CD14-positive monocyte (primary cell): ENCODE measurements at regions of chr11 and their contacts with region 1.

Region 1: DNA sequence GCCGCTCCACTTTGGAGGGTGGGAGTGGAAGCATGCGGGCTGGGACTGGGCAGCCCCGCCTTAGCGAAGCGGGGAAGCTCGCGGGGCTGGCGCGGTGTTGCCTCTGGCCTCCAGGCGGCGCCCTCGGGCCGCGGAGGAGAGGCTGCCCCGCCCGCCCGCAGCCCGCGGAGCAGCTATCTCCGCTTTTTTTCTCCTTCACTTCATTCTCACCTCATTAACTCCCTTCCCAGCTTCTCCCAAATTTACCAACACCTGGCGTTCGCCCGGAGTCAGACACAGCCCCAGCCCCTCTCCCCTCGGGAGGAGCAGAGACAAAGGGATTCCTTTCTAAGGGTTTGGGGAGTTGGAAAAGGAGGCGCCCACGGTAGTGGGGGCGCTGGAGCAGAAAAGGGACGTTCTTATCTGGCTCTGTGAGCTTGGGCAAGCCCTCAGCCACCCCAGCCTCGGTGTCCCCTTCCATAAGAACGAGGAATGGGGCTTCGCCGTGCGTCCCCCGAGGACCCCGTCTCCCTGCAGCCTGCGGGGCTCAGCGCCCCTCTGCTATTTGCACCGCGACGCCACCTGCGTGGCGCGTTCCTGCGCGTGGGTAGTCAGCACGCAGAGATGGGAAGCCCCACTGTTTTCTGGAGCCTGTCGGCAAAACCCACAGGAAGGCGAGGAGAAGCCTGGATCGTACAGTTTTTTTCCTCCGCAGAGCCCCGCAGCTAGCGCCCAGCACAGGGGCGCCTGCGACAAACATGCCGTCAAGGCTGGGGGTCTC is 1.5 kb upstream of the WNT11 start:
- DNase-seq: peak; percentile 67 to 75 (median 69)
- H3K4me3 ChIP-seq: peak overlapping the region; percentile 50 to 90 (median 53)
- H3K4me3 Mint-ChIP-seq: peak overlapping the region; percentile 84 to 95
- H3K27ac ChIP-seq: no peak overlapping the region
- H3K27ac Mint-ChIP-seq: peak overlapping the region in 2 of 7 donors; percentile 41 to 66
- H3K4me1 ChIP-seq: peaks cover 48 to 58% of the 10 kb centered on the region in 2 donors
- H3K4me1 Mint-ChIP-seq: peaks cover 38% of the 10 kb centered on the region
- H3K27me3 ChIP-seq: peaks cover 42 to 72% of the 10 kb centered on the region in 2 donors
- H3K27me3 Mint-ChIP-seq: peaks cover 57 to 97% (median 75%) of the 10 kb centered on the region in 3 donors
- CTCF ChIP-seq: peak; percentile 98

Region 2: DNA sequence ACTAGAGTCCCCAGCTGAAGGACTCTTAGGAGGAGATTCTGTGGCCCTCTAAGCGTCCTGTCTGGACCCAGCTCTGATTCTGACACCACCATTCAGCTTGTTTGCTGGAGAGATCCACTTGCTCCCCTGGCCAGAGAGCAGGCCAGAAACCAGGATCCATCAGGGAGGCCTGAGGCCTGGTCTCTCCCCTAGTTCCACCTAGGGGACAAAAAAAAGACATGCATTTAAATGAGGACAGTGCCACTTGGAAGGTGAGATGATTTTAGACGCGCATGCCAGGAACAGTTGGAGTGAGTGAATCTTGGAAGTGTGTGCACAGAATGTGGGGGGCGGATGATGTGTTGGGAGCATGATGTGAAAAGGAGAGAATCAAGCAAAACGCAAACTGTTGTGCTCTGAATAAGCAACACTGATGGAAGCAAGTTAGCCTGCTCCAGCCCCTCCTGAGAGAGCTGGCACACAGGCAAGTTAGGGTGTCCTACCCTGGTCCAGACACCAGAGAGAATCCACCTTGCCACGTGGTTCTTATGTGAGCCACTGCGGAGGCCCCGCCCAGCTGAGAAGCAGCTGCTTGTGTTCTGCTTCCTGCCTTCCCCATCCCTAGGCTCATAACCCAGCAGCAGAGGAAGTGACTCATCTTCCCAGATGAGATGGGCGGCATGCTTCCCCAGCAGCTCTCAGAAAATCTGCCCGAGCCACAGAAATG is 1065.0 kb before region 1 on chr11:
- intact Hi-C with region 1: no loop called
- DNase-seq: peak; percentile 93 to 96 (median 95)
- H3K4me3 ChIP-seq: peak overlapping the region in 1 of 3 experiments; percentile 47
- H3K4me3 Mint-ChIP-seq: peak overlapping the region; percentile 4 to 82
- H3K27ac ChIP-seq: peak overlapping the region in 1 of 2 donors; percentile 51
- H3K27ac Mint-ChIP-seq: peak overlapping the region; percentile 77 to 96 (median 88)
- H3K4me1 ChIP-seq: peaks cover 34 to 38% of the 10 kb centered on the region in 2 donors
- H3K4me1 Mint-ChIP-seq: peaks cover 38% of the 10 kb centered on the region
- H3K27me3 ChIP-seq: no peaks in the 10 kb centered on the region
- H3K27me3 Mint-ChIP-seq: peaks cover 8 to 14% (median 8%) of the 10 kb centered on the region in 3 donors
- CTCF ChIP-seq: no peak

Region 3: GRCh38 chr11:76235233-76236091 is 27.6 kb after region 1 on chr11:
- intact Hi-C with region 1: loop called (anchors 2 kb)
- DNase-seq: peak; percentile 88 to 90 (median 90)
- H3K4me3 ChIP-seq: peak overlapping the region; percentile 62 to 86 (median 75)
- H3K4me3 Mint-ChIP-seq: peak overlapping the region; percentile 95 to 96
- H3K27ac ChIP-seq: peak overlapping the region; percentile 89 to 91
- H3K27ac Mint-ChIP-seq: peak overlapping the region; percentile 97 to 99 (median 99)
- H3K4me1 ChIP-seq: peaks cover 30 to 41% of the 10 kb centered on the region in 2 donors
- H3K4me1 Mint-ChIP-seq: peaks cover 33% of the 10 kb centered on the region
- H3K27me3 ChIP-seq: no peaks in the 10 kb centered on the region
- H3K27me3 Mint-ChIP-seq: peaks cover 0 to 10% (median 3%) of the 10 kb centered on the region in 3 donors
- CTCF ChIP-seq: no peak

Region 4: DNA sequence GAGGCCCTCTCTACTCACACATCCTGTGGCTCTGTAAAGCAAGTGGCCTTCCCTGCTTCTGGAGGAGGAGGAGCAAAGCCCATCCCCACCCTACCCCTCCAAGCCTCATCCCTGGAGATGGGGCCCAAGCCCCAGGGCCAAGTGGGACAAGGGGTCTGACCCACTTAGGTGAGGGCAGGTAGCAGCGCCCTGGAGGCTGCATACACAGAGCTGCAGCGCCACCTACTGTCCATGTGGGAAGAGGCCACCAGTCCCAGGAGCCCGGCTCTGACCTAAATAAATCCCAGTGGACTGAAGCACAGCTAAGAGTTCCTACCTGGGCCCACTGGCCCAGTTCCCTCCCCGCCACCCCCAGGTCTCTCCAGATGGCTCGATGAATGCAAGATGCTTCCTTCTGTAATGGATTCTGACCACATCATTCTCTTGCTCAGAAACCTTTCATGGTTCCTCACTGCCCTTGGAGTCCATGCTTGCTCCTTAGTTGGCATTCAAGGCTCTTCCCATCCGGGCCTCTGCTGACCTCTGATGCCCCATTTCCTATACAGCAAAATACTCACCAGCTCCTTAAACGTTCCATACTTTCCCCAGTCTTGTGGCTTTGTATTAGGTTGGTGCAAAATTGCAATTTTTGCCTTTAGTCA is 111.0 kb after region 1 on chr11:
- intact Hi-C with region 1: loop called (anchors 1 to 2 kb)
- DNase-seq: peak; percentile 70 to 81 (median 78)
- H3K4me3 ChIP-seq: no peak overlapping the region
- H3K4me3 Mint-ChIP-seq: no peak overlapping the region
- H3K27ac ChIP-seq: no peak overlapping the region
- H3K27ac Mint-ChIP-seq: no peak overlapping the region
- H3K4me1 ChIP-seq: peaks cover 11 to 18% of the 10 kb centered on the region in 2 donors
- H3K4me1 Mint-ChIP-seq: peaks cover 20% of the 10 kb centered on the region
- H3K27me3 ChIP-seq: peaks cover 17 to 35% of the 10 kb centered on the region in 2 donors
- H3K27me3 Mint-ChIP-seq: peaks cover 25 to 38% (median 33%) of the 10 kb centered on the region in 3 donors
- CTCF ChIP-seq: peak; percentile 98

Region 5: GRCh38 chr11:76355172-76355571 is 147.3 kb after region 1 on chr11:
- intact Hi-C with region 1: no loop called
- DNase-seq: no peak
- H3K4me3 ChIP-seq: no peak overlapping the region
- H3K4me3 Mint-ChIP-seq: no peak overlapping the region
- H3K27ac ChIP-seq: no peak overlapping the region
- H3K27ac Mint-ChIP-seq: no peak overlapping the region
- H3K4me1 ChIP-seq: no peaks in the 10 kb centered on the region
- H3K4me1 Mint-ChIP-seq: no peaks in the 10 kb centered on the region
- H3K27me3 ChIP-seq: no peaks in the 10 kb centered on the region
- H3K27me3 Mint-ChIP-seq: no peaks in the 10 kb centered on the region
- CTCF ChIP-seq: no peak

Region 6: DNA sequence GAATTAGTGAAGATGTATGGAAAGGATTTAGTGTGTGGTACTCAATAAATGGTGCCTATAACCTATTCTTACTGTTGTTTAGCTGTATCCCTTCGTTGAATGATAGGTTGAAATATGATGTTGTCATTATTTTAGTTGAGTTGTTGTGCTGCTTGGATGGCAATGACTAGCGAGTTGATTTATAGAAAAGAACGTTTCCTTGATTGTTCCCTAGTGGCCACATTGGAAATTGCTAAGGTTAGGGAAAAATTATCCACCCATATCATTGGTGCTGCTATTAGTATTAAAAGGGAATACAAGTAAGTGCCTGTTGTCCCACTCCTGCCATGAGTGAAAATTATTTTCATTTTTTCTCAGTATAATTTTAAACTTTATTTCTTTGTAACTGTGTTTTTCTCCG is 251.5 kb after region 1 on chr11:
- intact Hi-C with region 1: loop called in 1 of 2 experiments (anchors 10 kb)
- DNase-seq: no peak
- H3K4me3 ChIP-seq: no peak overlapping the region
- H3K4me3 Mint-ChIP-seq: no peak overlapping the region
- H3K27ac ChIP-seq: no peak overlapping the region
- H3K27ac Mint-ChIP-seq: no peak overlapping the region
- H3K4me1 ChIP-seq: peaks cover 5 to 11% of the 10 kb centered on the region in 2 donors
- H3K4me1 Mint-ChIP-seq: peaks cover 10% of the 10 kb centered on the region
- H3K27me3 ChIP-seq: no peaks in the 10 kb centered on the region
- H3K27me3 Mint-ChIP-seq: peaks cover 0 to 1% (median 0%) of the 10 kb centered on the region in 3 donors
- CTCF ChIP-seq: peak; percentile 39

Region 7: DNA sequence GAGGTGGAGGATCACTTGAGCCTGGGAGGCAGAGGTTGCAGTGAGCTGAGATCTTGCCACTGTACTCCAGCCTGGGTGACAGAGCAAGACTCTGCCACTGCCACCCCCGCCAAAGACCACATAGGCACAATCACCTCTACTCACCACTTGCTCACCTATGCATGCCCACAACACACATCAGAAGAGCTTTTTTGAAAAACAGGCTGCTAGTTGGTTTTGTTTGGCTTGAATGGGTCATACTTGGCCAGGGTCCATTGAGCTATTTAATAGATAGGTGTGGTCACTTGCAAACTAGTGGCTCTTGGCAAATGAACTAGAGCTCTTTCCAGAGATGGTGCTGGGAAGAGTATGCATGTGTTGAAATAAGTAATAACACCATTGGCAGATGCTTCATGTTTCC is 317.1 kb after region 1 on chr11:
- intact Hi-C with region 1: no loop called
- DNase-seq: no peak
- H3K4me3 ChIP-seq: no peak overlapping the region
- H3K4me3 Mint-ChIP-seq: no peak overlapping the region
- H3K27ac ChIP-seq: no peak overlapping the region
- H3K27ac Mint-ChIP-seq: peak overlapping the region in 1 of 7 donors; percentile 13
- H3K4me1 ChIP-seq: peaks cover 0 to 8% of the 10 kb centered on the region in 2 donors
- H3K4me1 Mint-ChIP-seq: peaks cover 4% of the 10 kb centered on the region
- H3K27me3 ChIP-seq: no peaks in the 10 kb centered on the region
- H3K27me3 Mint-ChIP-seq: no peaks in the 10 kb centered on the region
- CTCF ChIP-seq: no peak

Region 8: DNA sequence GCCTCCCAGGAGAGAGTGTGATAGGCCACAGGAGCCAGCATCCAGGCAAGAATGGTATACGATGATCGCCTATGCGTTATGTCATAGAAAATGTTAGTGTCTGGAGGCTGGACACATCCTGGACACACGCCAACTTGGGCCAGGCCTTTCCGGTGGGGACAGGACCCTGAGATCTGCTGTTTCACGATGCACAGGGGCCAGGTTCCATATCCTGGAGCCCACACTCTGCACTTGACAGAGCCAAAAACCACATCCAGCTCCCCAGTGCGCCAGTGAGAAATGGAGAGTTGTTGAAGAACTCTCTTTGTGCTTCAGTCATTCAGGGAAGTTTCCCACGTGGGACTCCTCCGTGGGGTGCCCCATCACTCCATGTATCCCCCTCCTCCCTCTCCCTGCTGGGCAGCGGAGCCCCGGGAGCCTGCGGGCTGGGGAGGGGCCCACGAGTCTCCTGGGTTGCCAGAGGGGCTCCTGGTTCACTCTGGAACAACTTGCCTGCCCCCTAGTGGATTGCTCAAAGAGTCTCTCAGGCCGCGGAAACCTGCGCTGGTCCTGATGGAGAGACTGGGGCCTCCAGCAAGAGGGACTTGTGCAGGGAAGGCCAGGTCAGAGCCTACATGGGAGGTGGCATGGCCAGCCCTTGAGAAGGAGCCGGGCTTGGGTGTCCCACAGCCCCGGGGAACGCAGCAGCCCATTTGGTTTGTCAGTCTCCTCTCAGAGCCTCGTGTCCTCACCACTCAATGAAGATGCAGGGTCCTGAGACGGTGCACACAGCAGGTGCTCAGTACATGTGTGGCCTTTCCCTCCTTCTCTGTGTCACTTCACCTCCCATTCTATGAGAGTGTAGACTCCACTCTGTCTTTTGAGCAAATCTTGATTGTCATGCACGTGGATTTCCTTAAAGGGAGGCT is 472.9 kb after region 1 on chr11:
- intact Hi-C with region 1: loop called in 1 of 2 experiments (anchors 10 kb)
- DNase-seq: peak; percentile 44 to 77 (median 67)
- H3K4me3 ChIP-seq: no peak overlapping the region
- H3K4me3 Mint-ChIP-seq: no peak overlapping the region
- H3K27ac ChIP-seq: no peak overlapping the region
- H3K27ac Mint-ChIP-seq: peak overlapping the region in 2 of 7 donors; percentile 27 to 79
- H3K4me1 ChIP-seq: peaks cover 15 to 16% of the 10 kb centered on the region in 2 donors
- H3K4me1 Mint-ChIP-seq: peaks cover 33% of the 10 kb centered on the region
- H3K27me3 ChIP-seq: peaks cover 0 to 12% of the 10 kb centered on the region in 2 donors
- H3K27me3 Mint-ChIP-seq: peaks cover 35 to 52% (median 38%) of the 10 kb centered on the region in 3 donors
- CTCF ChIP-seq: peak; percentile 89